GM12878 (cell line): ENCODE measurements at regions of chr12 and their contacts with region 1.

Region 1: GRCh38 chr12:54993161-54993835 is 8.7 kb upstream of the TESPA1 start:
- DNase-seq: no peak
- ATAC-seq: peak; percentile 76
- H3K4me3 ChIP-seq: no peak overlapping the region
- H3K27ac ChIP-seq: no peak overlapping the region
- H3K4me1 ChIP-seq: peaks cover 25% of the 10 kb centered on the region
- H3K27me3 ChIP-seq: no peaks in the 10 kb centered on the region
- CTCF ChIP-seq: peak; percentile 70 to 82 (median 78)
- EP300 ChIP-seq: no peak
- POLR2A ChIP-seq: no peak
- RAD21 ChIP-seq: peak; percentile 95

Region 2: DNA sequence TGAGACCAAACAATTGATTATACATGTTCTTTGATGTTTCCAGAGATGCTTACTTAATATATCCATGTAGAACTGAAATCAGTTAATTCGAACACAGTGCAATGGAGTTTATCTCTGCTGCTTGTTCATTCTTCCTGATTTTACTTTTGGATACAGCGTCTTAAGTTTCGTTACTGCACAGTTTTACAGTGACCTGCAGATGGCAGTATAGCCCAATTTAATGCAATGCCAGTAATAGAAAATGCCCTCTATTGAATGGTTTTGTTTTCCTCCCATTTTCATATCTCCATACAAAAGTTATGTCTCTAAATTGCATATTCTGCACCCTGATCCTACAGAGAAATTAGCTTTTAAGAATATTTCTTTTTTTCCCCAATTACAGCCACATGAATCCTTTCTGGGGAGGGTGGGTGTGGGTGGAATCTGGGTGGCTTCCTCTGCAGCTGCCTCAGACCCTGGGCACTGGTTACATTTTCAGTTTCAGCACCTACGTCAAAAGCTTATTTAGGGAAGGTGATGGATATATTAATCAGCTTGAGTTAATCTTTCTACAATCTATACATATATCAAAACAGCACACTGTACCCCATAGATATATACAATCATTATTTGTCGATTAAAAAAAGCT is 244.0 kb before region 1 on chr12:
- CTCF ChIA-PET with region 1: interaction called, 50 read pairs
- POLR2A ChIA-PET with region 1: no interaction called
- RAD21 ChIA-PET with region 1: interaction called, 28 read pairs
- SMC1A ChIA-PET with region 1: interaction called, 39 read pairs
- in situ Hi-C with region 1: no loop called
- intact Hi-C with region 1: loop called (anchors 5 kb)
- DNase-seq: peak; percentile 5
- ATAC-seq: peak; percentile 88
- H3K4me3 ChIP-seq: no peak overlapping the region
- H3K27ac ChIP-seq: no peak overlapping the region
- H3K4me1 ChIP-seq: no peaks in the 10 kb centered on the region
- H3K27me3 ChIP-seq: no peaks in the 10 kb centered on the region
- CTCF ChIP-seq: peak; percentile 62 to 86 (median 75)
- EP300 ChIP-seq: no peak
- POLR2A ChIP-seq: no peak
- RAD21 ChIP-seq: peak; percentile 84

Region 3: DNA sequence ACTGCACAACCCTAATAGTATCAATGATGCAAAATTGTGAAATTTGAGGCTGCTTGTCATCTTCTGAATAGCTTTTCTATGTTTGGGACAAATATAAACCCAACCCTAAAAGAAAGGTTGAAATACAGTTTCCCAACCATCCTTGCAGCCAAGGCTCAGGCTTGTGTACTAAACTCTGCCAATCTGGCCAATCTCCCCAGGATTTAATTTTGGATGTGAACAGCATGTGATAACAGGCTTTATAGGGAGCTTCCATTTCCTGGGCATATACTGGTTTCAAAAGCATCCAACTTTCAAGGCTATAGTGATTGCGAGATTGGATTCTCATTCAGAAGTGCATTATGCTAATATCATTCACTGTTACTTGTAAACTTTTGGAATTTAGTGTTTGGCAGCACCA is 194.6 kb before region 1 on chr12:
- CTCF ChIA-PET with region 1: no interaction called
- POLR2A ChIA-PET with region 1: no interaction called
- RAD21 ChIA-PET with region 1: no interaction called
- SMC1A ChIA-PET with region 1: no interaction called
- in situ Hi-C with region 1: no loop called
- intact Hi-C with region 1: no loop called
- DNase-seq: no peak
- ATAC-seq: no peak
- H3K4me3 ChIP-seq: no peak overlapping the region
- H3K27ac ChIP-seq: no peak overlapping the region
- H3K4me1 ChIP-seq: no peaks in the 10 kb centered on the region
- H3K27me3 ChIP-seq: no peaks in the 10 kb centered on the region
- CTCF ChIP-seq: no peak
- EP300 ChIP-seq: no peak
- POLR2A ChIP-seq: no peak
- RAD21 ChIP-seq: no peak

Region 4: DNA sequence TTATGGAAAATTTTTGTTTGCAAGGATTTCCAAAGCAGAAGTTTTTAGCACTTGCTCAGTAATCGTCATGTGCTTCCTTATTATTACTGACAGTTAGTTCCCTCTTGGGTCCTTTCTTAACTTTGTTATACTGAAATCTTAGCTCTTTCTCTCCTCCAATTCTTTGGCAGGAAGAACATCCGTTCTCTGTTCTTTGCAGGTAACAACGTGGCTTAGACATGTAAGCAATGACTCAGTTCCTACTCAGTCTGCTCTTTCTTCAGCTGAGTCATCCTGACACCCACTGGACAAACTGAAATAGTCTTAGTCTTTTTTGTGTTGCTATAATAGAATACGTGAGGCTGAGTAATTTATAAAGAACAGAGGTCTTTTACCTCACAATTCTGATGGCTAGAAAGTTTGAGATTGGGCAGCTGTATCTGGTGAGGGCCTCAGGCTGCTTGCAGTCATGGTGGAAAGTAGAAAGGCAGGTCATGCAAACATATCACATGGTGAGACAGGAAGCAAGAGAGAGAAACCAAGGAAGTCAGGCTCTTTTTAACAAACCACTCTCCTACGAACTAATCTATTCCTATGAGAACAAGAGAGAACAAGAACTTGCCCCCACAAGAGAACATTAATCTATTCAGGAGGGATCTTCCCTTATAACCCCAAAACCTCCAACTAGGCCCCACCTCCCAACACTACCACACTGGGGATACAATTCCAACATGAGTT is 57.9 kb before region 1 on chr12:
- CTCF ChIA-PET with region 1: interaction called, 11 read pairs
- POLR2A ChIA-PET with region 1: no interaction called
- RAD21 ChIA-PET with region 1: interaction called, 8 read pairs
- SMC1A ChIA-PET with region 1: interaction called, 4 read pairs
- in situ Hi-C with region 1: no loop called
- intact Hi-C with region 1: no loop called
- DNase-seq: peak; percentile 60
- ATAC-seq: peak; percentile 98
- H3K4me3 ChIP-seq: no peak overlapping the region
- H3K27ac ChIP-seq: peak overlapping the region; percentile 60
- H3K4me1 ChIP-seq: peaks cover 5% of the 10 kb centered on the region
- H3K27me3 ChIP-seq: no peaks in the 10 kb centered on the region
- CTCF ChIP-seq: peak in 2 of 3 experiments; percentile 1 to 39; a peak in 2 of 6 replicates
- EP300 ChIP-seq: no peak
- POLR2A ChIP-seq: no peak
- RAD21 ChIP-seq: peak; percentile 63

Region 5: DNA sequence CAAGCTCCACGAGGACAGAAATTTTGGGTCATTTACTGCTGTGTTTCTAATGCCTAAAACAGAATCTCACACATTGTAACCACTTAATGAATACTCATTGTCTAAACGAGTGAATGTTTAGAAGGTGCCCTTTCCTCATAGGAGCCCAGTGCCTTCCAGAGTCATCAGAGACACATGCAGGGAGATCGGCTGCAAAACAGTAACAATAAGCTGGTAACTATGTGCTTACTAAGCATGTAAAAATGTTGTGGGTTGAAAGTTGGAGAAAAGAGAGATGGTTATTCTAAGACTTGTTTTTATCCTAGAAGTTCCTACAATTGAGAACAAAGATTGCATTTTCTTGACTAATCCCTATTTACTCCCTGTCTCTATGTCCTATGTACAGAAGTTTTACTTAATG is 16.1 kb before region 1 on chr12:
- CTCF ChIA-PET with region 1: interaction called, 50 read pairs
- POLR2A ChIA-PET with region 1: interaction called, 3 read pairs
- RAD21 ChIA-PET with region 1: interaction called, 33 read pairs
- SMC1A ChIA-PET with region 1: interaction called, 35 read pairs
- in situ Hi-C with region 1: no loop called
- intact Hi-C with region 1: no loop called
- DNase-seq: no peak
- ATAC-seq: no peak
- H3K4me3 ChIP-seq: no peak overlapping the region
- H3K27ac ChIP-seq: no peak overlapping the region
- H3K4me1 ChIP-seq: peaks cover 6% of the 10 kb centered on the region; the same call in 1 of the 2 replicates
- H3K27me3 ChIP-seq: no peaks in the 10 kb centered on the region
- CTCF ChIP-seq: no peak
- EP300 ChIP-seq: no peak
- POLR2A ChIP-seq: no peak
- RAD21 ChIP-seq: no peak

Region 6: GRCh38 chr12:55060470-55060869 is 67.2 kb after region 1 on chr12:
- CTCF ChIA-PET with region 1: interaction called, 700 read pairs
- POLR2A ChIA-PET with region 1: no interaction called
- RAD21 ChIA-PET with region 1: interaction called, 7 read pairs
- SMC1A ChIA-PET with region 1: interaction called, 429 read pairs
- in situ Hi-C with region 1: no loop called
- intact Hi-C with region 1: no loop called
- DNase-seq: peak; percentile 61
- ATAC-seq: peak; percentile 100
- H3K4me3 ChIP-seq: no peak overlapping the region
- H3K27ac ChIP-seq: no peak overlapping the region
- H3K4me1 ChIP-seq: peaks cover 12% of the 10 kb centered on the region
- H3K27me3 ChIP-seq: no peaks in the 10 kb centered on the region; a peak in 1 of 4 replicates
- CTCF ChIP-seq: no peak
- EP300 ChIP-seq: no peak; a peak in 1 of 4 replicates
- POLR2A ChIP-seq: no peak
- RAD21 ChIP-seq: no peak

Region 7: DNA sequence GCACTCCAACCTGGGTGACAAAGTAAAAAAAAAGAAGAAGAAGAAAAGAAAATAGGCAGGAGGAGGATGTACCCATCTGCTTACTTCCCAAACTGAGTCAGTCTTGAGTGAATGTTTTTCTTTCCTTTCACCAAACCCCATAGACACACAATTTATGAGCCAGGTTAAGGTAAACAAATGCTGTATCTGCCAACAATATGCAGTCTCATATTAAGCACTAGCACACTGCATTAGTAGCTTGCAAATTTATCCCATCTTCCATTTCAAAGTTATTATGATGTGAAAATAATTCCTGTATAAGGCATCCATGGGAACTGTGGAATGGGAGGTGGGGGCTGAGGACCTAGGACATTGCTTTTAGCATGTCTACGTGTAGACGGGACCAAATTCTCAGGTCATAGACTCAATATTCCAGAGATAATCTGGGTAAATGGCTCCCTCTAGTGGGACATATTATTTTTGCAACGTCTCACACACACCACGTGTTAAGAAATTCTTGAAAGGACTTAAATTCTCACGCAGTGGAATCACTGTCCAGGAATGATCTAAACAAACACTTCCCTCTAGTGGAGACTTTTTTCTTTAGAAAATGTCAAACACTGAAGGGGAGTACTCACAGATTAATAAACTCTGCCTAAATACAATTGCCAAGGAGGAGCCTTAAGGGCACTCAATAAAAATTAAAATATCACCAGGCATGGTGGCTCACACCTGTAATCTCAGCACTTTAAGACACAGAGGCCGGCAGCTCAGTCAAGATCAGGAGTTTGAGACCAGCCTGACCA is 626.2 kb after region 1 on chr12:
- CTCF ChIA-PET with region 1: interaction called, 3 read pairs
- POLR2A ChIA-PET with region 1: no interaction called
- RAD21 ChIA-PET with region 1: no interaction called
- SMC1A ChIA-PET with region 1: no interaction called
- in situ Hi-C with region 1: no loop called
- intact Hi-C with region 1: loop called (anchors 10 kb)
- DNase-seq: peak; percentile 74
- ATAC-seq: peak; percentile 85
- H3K4me3 ChIP-seq: no peak overlapping the region
- H3K27ac ChIP-seq: no peak overlapping the region
- H3K4me1 ChIP-seq: no peaks in the 10 kb centered on the region
- H3K27me3 ChIP-seq: no peaks in the 10 kb centered on the region
- CTCF ChIP-seq: peak; percentile 62 to 88 (median 85)
- EP300 ChIP-seq: no peak
- POLR2A ChIP-seq: no peak
- RAD21 ChIP-seq: peak; percentile 89